ENCODE measurements at regions of chr1 and their contacts with region 1.

Region 1: GRCh38 chr1:180154325-180155181 is at the start of gene QSOX1:
- DNase-seq: peak; percentile 43
- H3K4me3 ChIP-seq: peak within 1 kb of the TSS; percentile 100
- H3K27ac ChIP-seq: peak within 1 kb of the TSS; percentile 83
- H3K27me3 ChIP-seq: no peaks in the 10 kb centered on the region
- CTCF ChIP-seq: no peak
- polyA plus RNA-seq, gene QSOX1: 1,269 and 1,338 TPM in 2 replicates

Region 2: DNA sequence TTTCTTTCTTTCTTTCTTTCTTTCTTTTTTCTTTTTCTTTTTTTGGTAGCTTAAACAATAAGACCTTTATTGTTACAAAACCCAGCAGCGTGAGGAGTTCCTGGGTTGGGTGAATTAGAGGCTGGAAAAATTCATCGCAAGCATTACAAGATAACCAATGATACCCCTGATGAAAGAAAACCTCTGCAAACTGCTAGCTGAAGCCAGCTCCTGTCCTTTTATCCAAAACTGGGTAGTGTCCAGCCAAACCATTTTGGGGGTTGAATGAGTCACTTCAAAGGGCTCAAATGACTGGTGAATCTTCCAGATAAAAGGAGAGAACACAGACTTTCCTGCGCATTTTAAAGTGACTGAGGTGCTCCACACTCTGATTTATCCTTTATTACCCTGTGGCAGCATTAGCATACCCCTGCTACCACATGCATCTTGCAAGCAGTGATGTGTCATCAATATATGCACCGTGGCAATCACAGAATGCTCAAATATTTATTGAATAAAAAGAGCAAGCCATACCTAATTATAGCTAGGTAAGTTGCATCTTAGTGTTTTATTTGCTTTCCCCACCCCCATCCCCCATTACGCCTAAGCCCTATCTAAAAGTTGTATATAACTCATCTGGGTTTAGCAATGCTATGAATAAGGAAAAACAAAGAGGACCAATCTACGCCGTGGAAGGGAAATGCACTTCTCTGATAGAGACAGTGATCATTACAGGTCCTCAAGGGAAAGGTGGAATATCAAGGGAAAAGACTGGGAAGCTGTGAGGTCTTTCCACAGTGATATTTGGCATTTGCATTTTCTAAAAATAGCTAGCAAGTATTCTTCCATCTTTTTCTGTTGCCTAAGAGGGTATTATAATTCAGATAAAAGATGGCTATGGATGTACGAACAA is 232.3 kb before region 1 on chr1:
- CTCF ChIA-PET with region 1: no interaction called
- POLR2A ChIA-PET with region 1: no interaction called
- DNase-seq: no peak
- H3K4me3 ChIP-seq: no peak overlapping the region
- H3K27ac ChIP-seq: no peak overlapping the region
- H3K27me3 ChIP-seq: no peaks in the 10 kb centered on the region
- CTCF ChIP-seq: no peak

Region 3: DNA sequence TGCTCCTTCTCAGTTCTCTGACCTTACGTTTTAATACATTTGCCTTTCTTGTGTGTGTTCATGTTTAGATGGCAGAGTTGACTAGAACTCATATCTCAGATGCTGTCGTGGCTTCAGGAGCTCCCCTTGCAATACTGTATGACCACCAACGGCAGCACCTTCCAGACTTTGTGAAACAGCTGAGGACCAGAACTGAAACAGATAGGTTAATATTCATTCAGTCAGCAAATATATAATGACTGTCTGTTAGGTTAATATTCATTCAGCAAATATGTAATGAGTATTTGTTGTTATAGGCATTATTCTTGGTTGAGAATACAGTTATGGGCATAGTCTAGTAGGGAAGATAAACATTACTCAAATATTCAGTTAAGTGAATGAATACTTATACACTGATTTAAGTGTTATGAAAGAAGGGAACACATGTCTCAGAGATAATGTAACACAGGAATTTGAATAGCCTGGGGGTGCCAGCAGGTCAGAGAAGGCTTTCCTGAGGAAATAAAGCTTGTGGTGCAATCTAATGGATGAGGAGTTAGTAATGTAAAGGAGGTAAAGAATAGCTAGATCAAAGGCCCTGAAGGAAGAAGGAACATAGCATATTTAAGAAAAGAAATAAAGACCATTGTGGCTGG is 111.4 kb before region 1 on chr1:
- CTCF ChIA-PET with region 1: no interaction called
- POLR2A ChIA-PET with region 1: interaction called, 11 read pairs
- DNase-seq: peak; percentile 42
- H3K4me3 ChIP-seq: no peak overlapping the region
- H3K27ac ChIP-seq: peak overlapping the region; percentile 53
- H3K27me3 ChIP-seq: no peaks in the 10 kb centered on the region
- CTCF ChIP-seq: no peak

Region 4: GRCh38 chr1:180092931-180093559 is 61.5 kb before region 1 on chr1:
- CTCF ChIA-PET with region 1: no interaction called
- POLR2A ChIA-PET with region 1: interaction called, 27 read pairs
- DNase-seq: no peak
- H3K4me3 ChIP-seq: no peak overlapping the region
- H3K27ac ChIP-seq: no peak overlapping the region
- H3K27me3 ChIP-seq: no peaks in the 10 kb centered on the region
- CTCF ChIP-seq: no peak

Region 5: GRCh38 chr1:180101411-180101810 is 53.1 kb before region 1 on chr1:
- CTCF ChIA-PET with region 1: no interaction called
- POLR2A ChIA-PET with region 1: interaction called, 27 read pairs
- DNase-seq: no peak
- H3K4me3 ChIP-seq: no peak overlapping the region
- H3K27ac ChIP-seq: no peak overlapping the region
- H3K27me3 ChIP-seq: no peaks in the 10 kb centered on the region
- CTCF ChIP-seq: no peak

Region 6: GRCh38 chr1:180112984-180113647 is 41.4 kb before region 1 on chr1:
- CTCF ChIA-PET with region 1: no interaction called
- POLR2A ChIA-PET with region 1: interaction called, 31 read pairs
- DNase-seq: no peak
- H3K4me3 ChIP-seq: no peak overlapping the region
- H3K27ac ChIP-seq: peak overlapping the region; percentile 33
- H3K27me3 ChIP-seq: no peaks in the 10 kb centered on the region
- CTCF ChIP-seq: no peak

Region 7: DNA sequence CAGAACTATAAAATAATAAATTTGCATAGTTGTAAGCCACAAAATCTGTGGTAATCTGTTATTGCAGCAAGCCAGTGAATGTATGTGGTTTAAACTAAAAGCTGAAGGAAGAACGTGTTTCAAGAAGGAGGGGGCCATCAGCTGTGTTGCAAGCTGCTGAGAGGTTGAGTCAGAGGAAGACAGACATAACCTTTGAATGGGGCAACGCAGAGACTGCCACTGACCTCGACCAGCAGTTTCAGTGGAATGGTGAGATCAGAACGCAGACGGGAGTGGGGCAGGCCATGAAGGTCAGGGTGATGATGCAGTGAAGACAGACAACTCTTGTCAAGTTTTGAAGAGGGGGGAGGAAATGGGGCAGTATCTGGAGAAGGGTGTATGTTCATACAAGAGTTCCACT is 23.0 kb before region 1 on chr1:
- CTCF ChIA-PET with region 1: no interaction called
- POLR2A ChIA-PET with region 1: interaction called, 16 read pairs
- DNase-seq: peak; percentile 93
- H3K4me3 ChIP-seq: no peak overlapping the region
- H3K27ac ChIP-seq: peak overlapping the region; percentile 85
- H3K27me3 ChIP-seq: no peaks in the 10 kb centered on the region
- CTCF ChIP-seq: no peak

Region 8: GRCh38 chr1:180168786-180169639 is 14.5 kb after region 1 on chr1:
- CTCF ChIA-PET with region 1: interaction called, 3 read pairs
- POLR2A ChIA-PET with region 1: interaction called, 10 read pairs
- DNase-seq: no peak
- H3K4me3 ChIP-seq: no peak overlapping the region
- H3K27ac ChIP-seq: peak overlapping the region; percentile 11
- H3K27me3 ChIP-seq: no peaks in the 10 kb centered on the region
- CTCF ChIP-seq: peak; percentile 54